HCT116 (cell line): ENCODE measurements at regions of chr13 and their contacts with region 1.

Region 1: GRCh38 chr13:106536244-106537034 is 977 bp upstream of the EFNB2 start:
- DNase-seq: peak; percentile 63
- ATAC-seq: peak; percentile 41
- H3K4me3 ChIP-seq: peak overlapping the region; percentile 43 to 90
- H3K27ac ChIP-seq: peak overlapping the region; percentile 43; the same call in 1 of the 2 replicates
- H3K4me1 ChIP-seq: peaks cover 8 to 24% of the 10 kb centered on the region in 2 experiments
- H3K27me3 ChIP-seq: no peaks in the 10 kb centered on the region
- CTCF ChIP-seq: peak; percentile 63 to 96 (median 93); a peak in 5 of 6 replicates
- POLR2A ChIP-seq: no peak
- RAD21 ChIP-seq: peak; percentile 89

Region 2: GRCh38 chr13:104773775-104774174 is 1762.7 kb before region 1 on chr13:
- CTCF ChIA-PET with region 1: interaction called, 5 read pairs
- POLR2A ChIA-PET with region 1: no interaction called
- RAD21 ChIA-PET with region 1: no interaction called
- intact Hi-C with region 1: loop called (anchors 5 kb)
- DNase-seq: peak; percentile 39
- ATAC-seq: peak; percentile 86
- H3K4me3 ChIP-seq: no peak overlapping the region
- H3K27ac ChIP-seq: no peak overlapping the region
- H3K4me1 ChIP-seq: no peaks in the 10 kb centered on the region
- H3K27me3 ChIP-seq: no peaks in the 10 kb centered on the region
- CTCF ChIP-seq: peak; percentile 25 to 73 (median 69); a peak in 5 of 6 replicates
- POLR2A ChIP-seq: no peak
- RAD21 ChIP-seq: peak; percentile 58

Region 3: GRCh38 chr13:105410602-105411001 is 1125.8 kb before region 1 on chr13:
- CTCF ChIA-PET with region 1: interaction called, 10 read pairs
- POLR2A ChIA-PET with region 1: no interaction called
- RAD21 ChIA-PET with region 1: no interaction called
- intact Hi-C with region 1: loop called (anchors 5 kb)
- DNase-seq: peak; percentile 23
- ATAC-seq: peak; percentile 76
- H3K4me3 ChIP-seq: no peak overlapping the region
- H3K27ac ChIP-seq: no peak overlapping the region
- H3K4me1 ChIP-seq: no peaks in the 10 kb centered on the region
- H3K27me3 ChIP-seq: no peaks in the 10 kb centered on the region
- CTCF ChIP-seq: peak; percentile 23 to 95 (median 86); a peak in 5 of 6 replicates
- POLR2A ChIP-seq: no peak
- RAD21 ChIP-seq: peak; percentile 62

Region 4: GRCh38 chr13:105918842-105919741 is 617.3 kb before region 1 on chr13:
- CTCF ChIA-PET with region 1: no interaction called
- POLR2A ChIA-PET with region 1: no interaction called
- RAD21 ChIA-PET with region 1: no interaction called
- intact Hi-C with region 1: loop called (anchors 1 kb)
- DNase-seq: peak; percentile 88
- ATAC-seq: peak; percentile 93
- H3K4me3 ChIP-seq: peak overlapping the region; percentile 19 to 48
- H3K27ac ChIP-seq: peak overlapping the region; percentile 75
- H3K4me1 ChIP-seq: peaks cover 22 to 40% of the 10 kb centered on the region in 2 experiments
- H3K27me3 ChIP-seq: no peaks in the 10 kb centered on the region
- CTCF ChIP-seq: no peak
- POLR2A ChIP-seq: peak; percentile 61
- RAD21 ChIP-seq: peak; percentile 41

Region 5: GRCh38 chr13:106100171-106100919 is 436.1 kb before region 1 on chr13:
- CTCF ChIA-PET with region 1: no interaction called
- POLR2A ChIA-PET with region 1: interaction called, 3 read pairs
- RAD21 ChIA-PET with region 1: no interaction called
- intact Hi-C with region 1: loop called (anchors 5 kb)
- DNase-seq: peak; percentile 46
- ATAC-seq: peak; percentile 28
- H3K4me3 ChIP-seq: no peak overlapping the region
- H3K27ac ChIP-seq: peak overlapping the region; percentile 48
- H3K4me1 ChIP-seq: peaks cover 87 to 93% of the 10 kb centered on the region in 2 experiments
- H3K27me3 ChIP-seq: no peaks in the 10 kb centered on the region
- CTCF ChIP-seq: no peak
- POLR2A ChIP-seq: no peak
- RAD21 ChIP-seq: peak; percentile 5; the same call in 1 of the 2 replicates

Region 6: GRCh38 chr13:106874323-106874722 is 337.9 kb after region 1 on chr13:
- CTCF ChIA-PET with region 1: no interaction called
- POLR2A ChIA-PET with region 1: no interaction called
- RAD21 ChIA-PET with region 1: no interaction called
- intact Hi-C with region 1: no loop called
- DNase-seq: no peak
- ATAC-seq: no peak
- H3K4me3 ChIP-seq: no peak overlapping the region
- H3K27ac ChIP-seq: no peak overlapping the region
- H3K4me1 ChIP-seq: no peaks in the 10 kb centered on the region
- H3K27me3 ChIP-seq: 0 out of 2 replicates have a peak, but pooled peaks cover 4% of the 10 kb centered on the region
- CTCF ChIP-seq: no peak
- POLR2A ChIP-seq: no peak
- RAD21 ChIP-seq: no peak